ENCODE measurements at regions of chr11 and their contacts with region 1.

Region 1: GRCh38 chr11:72483412-72484186 is 49.3 kb upstream of the CLPB start:
- DNase-seq: peak; percentile 69
- H3K4me3 Mint-ChIP-seq: peak overlapping the region; percentile 0
- H3K27ac Mint-ChIP-seq: peak overlapping the region; percentile 31
- H3K4me1 Mint-ChIP-seq: peaks cover 17% of the 10 kb centered on the region
- H3K27me3 Mint-ChIP-seq: peaks cover 12% of the 10 kb centered on the region

Region 2: GRCh38 chr11:72209101-72209500 is 274.5 kb before region 1 on chr11:
- intact Hi-C with region 1: no loop called
- DNase-seq: no peak
- H3K4me3 Mint-ChIP-seq: no peak overlapping the region
- H3K27ac Mint-ChIP-seq: no peak overlapping the region
- H3K4me1 Mint-ChIP-seq: no peaks in the 10 kb centered on the region
- H3K27me3 Mint-ChIP-seq: peaks cover 24% of the 10 kb centered on the region

Region 3: DNA sequence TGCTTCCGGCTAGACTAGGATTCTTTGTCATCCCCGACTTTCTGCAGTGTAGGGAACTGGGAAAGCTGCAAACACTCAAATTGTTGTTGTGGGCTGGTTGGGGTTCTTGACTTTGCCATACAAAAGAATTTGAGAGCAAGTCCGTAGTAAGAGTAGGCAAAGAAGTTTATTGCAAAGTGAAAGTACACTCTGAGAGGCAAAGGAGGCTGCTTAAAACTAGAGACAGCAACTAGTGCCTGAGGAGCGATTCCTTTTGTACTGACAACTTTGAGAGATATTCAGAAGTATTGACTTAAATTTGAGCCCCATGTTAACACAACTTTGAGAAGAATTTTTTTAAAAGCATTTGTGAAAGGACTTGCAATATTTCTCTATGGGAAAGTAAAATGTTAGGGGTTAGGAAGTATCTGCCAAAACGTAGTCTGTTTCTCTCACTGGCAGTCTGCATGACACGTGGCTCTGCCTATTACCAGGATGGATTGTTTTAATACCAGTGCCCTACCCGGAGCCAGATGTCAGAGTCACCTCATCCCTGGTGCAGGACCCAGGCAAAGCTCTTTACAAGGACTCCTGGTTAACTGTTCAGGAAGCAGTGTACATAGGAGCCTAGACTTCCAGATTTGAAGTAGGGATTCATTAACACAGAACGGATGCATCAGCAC is 35.8 kb after region 1 on chr11:
- intact Hi-C with region 1: loop called (anchors 5 kb)
- DNase-seq: peak; percentile 73
- H3K4me3 Mint-ChIP-seq: peak overlapping the region; percentile 73
- H3K27ac Mint-ChIP-seq: peak overlapping the region; percentile 82
- H3K4me1 Mint-ChIP-seq: peaks cover 19% of the 10 kb centered on the region
- H3K27me3 Mint-ChIP-seq: peaks cover 21% of the 10 kb centered on the region

Region 4: GRCh38 chr11:72553706-72554105 is 70.1 kb after region 1 on chr11:
- intact Hi-C with region 1: loop called (anchors 1 kb)
- DNase-seq: peak; percentile 73
- H3K4me3 Mint-ChIP-seq: no peak overlapping the region
- H3K27ac Mint-ChIP-seq: no peak overlapping the region
- H3K4me1 Mint-ChIP-seq: peaks cover 2% of the 10 kb centered on the region
- H3K27me3 Mint-ChIP-seq: peaks cover 30% of the 10 kb centered on the region

Region 5: DNA sequence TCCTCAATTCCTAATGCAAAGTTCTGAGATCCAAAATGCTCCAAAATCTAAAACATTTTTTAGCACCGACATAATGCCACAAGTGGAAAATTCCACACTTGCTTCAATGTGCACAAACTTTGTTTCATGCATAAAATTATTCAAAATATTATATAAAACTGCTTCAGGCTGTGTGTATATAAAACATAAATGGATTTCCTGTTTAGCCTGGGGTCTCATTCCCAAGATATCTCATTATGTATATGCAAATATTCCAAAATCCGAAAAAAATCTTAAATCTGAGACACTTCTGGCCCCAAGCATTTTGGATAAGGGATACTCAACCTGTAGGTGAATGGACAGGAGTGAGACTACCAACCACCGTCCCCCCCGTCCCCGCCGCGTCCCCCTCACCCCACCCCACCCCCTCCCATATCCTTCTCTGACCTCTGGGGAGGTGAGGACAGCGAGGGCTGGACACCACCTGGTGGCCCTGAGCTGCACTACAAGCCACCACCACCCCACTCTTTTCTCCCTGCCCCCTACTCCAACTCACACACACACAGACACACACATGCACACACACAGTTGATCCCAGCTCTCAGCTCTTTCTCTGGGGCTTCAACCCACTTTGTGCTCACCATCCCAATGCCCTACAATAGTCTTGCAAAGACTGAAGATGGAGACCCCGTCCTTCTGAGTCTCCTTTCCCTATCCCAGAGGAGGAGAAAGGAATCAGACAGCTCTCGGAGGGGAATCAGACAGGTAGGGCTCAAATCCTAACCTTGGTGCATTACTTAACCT is 89.7 kb after region 1 on chr11:
- intact Hi-C with region 1: loop called (anchors 1 kb)
- DNase-seq: peak; percentile 74
- H3K4me3 Mint-ChIP-seq: no peak overlapping the region
- H3K27ac Mint-ChIP-seq: no peak overlapping the region
- H3K4me1 Mint-ChIP-seq: peaks cover 16% of the 10 kb centered on the region
- H3K27me3 Mint-ChIP-seq: peaks cover 14% of the 10 kb centered on the region

Measured in activated CD4-positive, alpha-beta T cell treated with anti-CD3 and anti-CD28 coated beads, Interleukin-2, amount 10 ng/mL, durations not matched to agents 24 days and 14 days (primary cell).